ENCODE measurements at regions of chr19 and their contacts with region 1.

Region 1: DNA sequence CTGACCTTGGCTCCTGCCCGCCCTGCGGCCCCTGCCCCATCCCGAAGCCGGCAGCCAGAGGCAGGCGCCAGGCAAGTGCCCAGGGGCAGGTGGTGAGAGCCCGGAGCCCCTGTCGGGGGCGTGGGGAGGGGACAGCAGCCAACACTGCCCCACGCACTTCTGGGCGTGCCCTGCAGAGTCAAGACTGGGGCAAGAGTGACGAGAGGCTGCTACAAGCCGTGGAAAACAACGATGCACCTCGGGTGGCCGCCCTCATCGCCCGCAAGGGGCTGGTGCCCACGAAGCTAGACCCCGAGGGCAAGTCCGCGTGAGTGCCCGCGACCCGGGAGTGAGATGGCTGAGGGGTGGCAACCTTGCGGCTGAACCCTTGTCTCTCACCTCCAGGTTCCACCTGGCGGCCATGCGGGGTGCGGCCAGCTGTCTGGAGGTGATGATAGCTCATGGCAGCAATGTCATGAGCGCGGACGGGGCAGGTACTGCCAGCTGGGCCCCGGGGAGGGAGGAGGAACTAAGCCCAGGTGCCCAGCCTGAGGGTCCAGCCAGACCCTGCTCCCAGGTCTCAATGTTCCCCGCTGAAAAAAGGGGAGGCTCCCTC is 17.3 kb downstream of the ANKRD24 start:
- DNase-seq: no peak
- H3K4me3 ChIP-seq: no peak overlapping the region
- H3K27ac ChIP-seq: no peak overlapping the region
- H3K4me1 ChIP-seq: no peaks in the 10 kb centered on the region
- H3K27me3 ChIP-seq: peaks cover 6 to 12% of the 10 kb centered on the region in 2 experiments
- CTCF ChIP-seq: no peak
- POLR2A ChIP-seq: no peak

Region 2: GRCh38 chr19:4172861-4173473 is 26.8 kb before region 1 on chr19:
- CTCF ChIA-PET with region 1: interaction called, 11 read pairs
- POLR2A ChIA-PET with region 1: no interaction called
- dilution Hi-C with region 1: no loop called
- intact Hi-C with region 1: no loop called
- DNase-seq: no peak
- H3K4me3 ChIP-seq: no peak overlapping the region
- H3K27ac ChIP-seq: no peak overlapping the region
- H3K4me1 ChIP-seq: no peaks in the 10 kb centered on the region
- H3K27me3 ChIP-seq: peaks cover 0 to 2% of the 10 kb centered on the region in 2 experiments
- CTCF ChIP-seq: no peak
- POLR2A ChIP-seq: no peak

Region 3: DNA sequence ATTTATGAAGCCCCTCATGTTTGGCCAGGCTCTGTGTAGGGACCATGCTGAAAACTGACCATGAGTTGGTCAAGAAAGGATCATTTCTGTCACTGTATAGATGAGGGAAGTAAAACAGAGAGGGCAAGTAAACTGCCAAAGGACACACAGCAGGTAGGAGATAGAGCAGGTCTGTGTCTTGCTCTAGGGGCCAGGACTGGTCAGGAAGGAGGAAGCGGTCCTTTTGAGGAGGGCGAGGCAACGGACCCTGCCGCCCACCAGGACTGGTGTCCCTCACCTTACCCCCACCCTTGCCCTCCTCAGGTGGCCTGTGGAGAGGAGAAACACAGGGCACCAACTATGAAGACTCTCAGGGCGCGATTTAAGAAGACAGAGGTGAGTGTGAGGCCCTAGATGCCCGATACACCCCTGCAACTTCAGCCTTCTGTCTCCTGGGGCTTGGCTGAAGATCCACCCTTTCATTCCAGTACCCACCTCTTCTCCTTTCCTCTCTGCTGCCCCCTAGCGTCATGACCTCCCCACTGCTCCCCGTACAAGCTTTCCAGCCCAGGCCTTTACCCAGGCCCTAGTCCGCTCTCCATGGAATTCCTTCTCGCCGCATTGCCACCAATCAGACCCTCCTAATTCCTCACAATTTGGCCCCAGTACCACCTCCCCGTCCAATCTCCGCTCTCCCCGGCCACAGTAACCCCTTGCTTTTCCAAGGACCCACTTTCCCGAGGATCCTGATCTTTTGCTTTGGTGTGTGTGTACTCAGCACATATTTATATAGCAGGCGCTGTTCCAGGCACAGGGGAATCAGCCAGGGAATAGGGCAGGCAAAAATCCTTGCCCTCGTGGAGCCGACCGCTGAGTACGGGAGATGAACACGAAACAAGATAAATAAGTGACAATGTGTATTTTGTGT is 13.5 kb before region 1 on chr19:
- CTCF ChIA-PET with region 1: interaction called, 10 read pairs
- POLR2A ChIA-PET with region 1: no interaction called
- dilution Hi-C with region 1: no loop called
- intact Hi-C with region 1: no loop called
- DNase-seq: peak; percentile 61
- H3K4me3 ChIP-seq: no peak overlapping the region
- H3K27ac ChIP-seq: no peak overlapping the region
- H3K4me1 ChIP-seq: peaks cover 3% of the 10 kb centered on the region
- H3K27me3 ChIP-seq: no peaks in the 10 kb centered on the region
- CTCF ChIP-seq: peak; percentile 79 to 89
- POLR2A ChIP-seq: no peak

Measured in endothelial cell of umbilical vein (primary cell).